Thyroid gland (tissue), 4 donors: ENCODE measurements at regions of chr11 and their contacts with region 1.

Region 1: DNA sequence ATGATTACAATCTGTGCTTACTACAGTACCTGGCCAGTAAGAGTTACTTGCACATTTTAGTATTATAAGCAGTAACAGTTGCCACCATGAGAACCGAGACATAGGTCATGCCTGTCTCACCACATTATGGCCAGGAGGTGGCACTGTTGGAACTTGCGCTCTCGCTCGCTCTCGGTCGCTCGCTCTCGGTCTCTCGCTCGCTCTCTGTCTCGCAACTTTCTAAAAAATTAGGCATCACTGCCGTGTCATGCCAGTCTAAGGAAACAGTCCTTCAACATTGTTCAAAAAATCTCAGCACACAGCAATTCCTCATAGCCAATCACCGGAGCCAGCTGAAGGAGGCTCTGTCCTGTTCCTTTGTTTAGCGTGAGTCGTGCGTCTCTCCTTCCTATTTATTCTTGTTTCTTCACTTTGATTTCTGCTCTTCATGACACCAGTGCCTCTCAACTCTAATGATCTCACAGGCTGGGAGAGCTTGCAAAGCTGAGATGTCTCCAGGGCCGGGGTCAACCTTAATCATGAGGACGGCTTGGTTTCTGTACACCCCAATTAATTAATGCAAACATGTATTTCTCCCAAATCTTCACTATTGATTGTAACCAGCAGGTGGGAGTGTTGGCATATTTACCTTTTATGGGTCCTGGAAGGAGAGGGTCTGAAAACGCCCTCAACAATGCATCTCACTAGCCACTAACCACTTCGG is 6.3 kb upstream of the ADAMTS8 start:
- DNase-seq: peak; percentile 78 to 80
- H3K4me3 ChIP-seq: peak overlapping the region; percentile 11 to 36 (median 34)
- H3K27ac ChIP-seq: peak overlapping the region; percentile 8 to 81 (median 68)
- H3K4me1 ChIP-seq: peaks cover 6 to 11% of the 10 kb centered on the region in 2 donors
- H3K27me3 ChIP-seq: no peaks in the 10 kb centered on the region
- CTCF ChIP-seq: peak; percentile 53 to 92 (median 78)
- POLR2A ChIP-seq: no peak

Region 2: GRCh38 chr11:130203766-130204702 is 230.6 kb before region 1 on chr11:
- intact Hi-C with region 1: no loop called
- DNase-seq: no peak
- H3K4me3 ChIP-seq: no peak overlapping the region
- H3K27ac ChIP-seq: no peak overlapping the region
- H3K4me1 ChIP-seq: no peaks in the 10 kb centered on the region
- H3K27me3 ChIP-seq: no peaks in the 10 kb centered on the region
- CTCF ChIP-seq: no peak
- POLR2A ChIP-seq: no peak

Region 3: GRCh38 chr11:130513132-130513531 is 78.5 kb after region 1 on chr11:
- intact Hi-C with region 1: no loop called
- DNase-seq: peak in 1 of 2 donors; percentile 41
- H3K4me3 ChIP-seq: no peak overlapping the region
- H3K27ac ChIP-seq: no peak overlapping the region
- H3K4me1 ChIP-seq: peaks cover 11 to 13% of the 10 kb centered on the region in 2 donors
- H3K27me3 ChIP-seq: no peaks in the 10 kb centered on the region
- CTCF ChIP-seq: no peak
- POLR2A ChIP-seq: no peak

Region 4: GRCh38 chr11:130827451-130828377 is 393.0 kb after region 1 on chr11:
- intact Hi-C with region 1: loop called (anchors 10 kb)
- DNase-seq: peak; percentile 83 to 84
- H3K4me3 ChIP-seq: no peak overlapping the region
- H3K27ac ChIP-seq: peak overlapping the region in 1 of 3 donors; percentile 15
- H3K4me1 ChIP-seq: peaks cover 0 to 7% of the 10 kb centered on the region in 2 donors
- H3K27me3 ChIP-seq: no peaks in the 10 kb centered on the region
- CTCF ChIP-seq: peak in 5 of 6 experiments; percentile 51 to 81 (median 68)
- POLR2A ChIP-seq: no peak

Region 5: GRCh38 chr11:130861902-130862860 is 427.5 kb after region 1 on chr11:
- intact Hi-C with region 1: loop called (anchors 2 kb)
- DNase-seq: peak; percentile 92 to 94
- H3K4me3 ChIP-seq: no peak overlapping the region
- H3K27ac ChIP-seq: no peak overlapping the region
- H3K4me1 ChIP-seq: peaks cover 0 to 8% of the 10 kb centered on the region in 2 donors
- H3K27me3 ChIP-seq: no peaks in the 10 kb centered on the region
- CTCF ChIP-seq: peak; percentile 99 to 100 (median 100)
- POLR2A ChIP-seq: no peak